ENCODE measurements at regions of chr14 and their contacts with region 1.

Region 1: GRCh38 chr14:59507063-59507780 is 22.9 kb downstream of the JKAMP start:
- DNase-seq: peak in 1 of 2 donors; percentile 32
- ATAC-seq: peak in 6 of 8 donors; percentile 47 to 75 (median 58)
- H3K4me3 ChIP-seq: no peak overlapping the region
- H3K27ac ChIP-seq: no peak overlapping the region
- H3K4me1 ChIP-seq: no peaks in the 10 kb centered on the region
- H3K27me3 ChIP-seq: peaks cover 0 to 8% (median 0%) of the 10 kb centered on the region in 7 donors
- CTCF ChIP-seq: peak in 8 of 9 donors; percentile 55 to 81 (median 70)

Region 2: DNA sequence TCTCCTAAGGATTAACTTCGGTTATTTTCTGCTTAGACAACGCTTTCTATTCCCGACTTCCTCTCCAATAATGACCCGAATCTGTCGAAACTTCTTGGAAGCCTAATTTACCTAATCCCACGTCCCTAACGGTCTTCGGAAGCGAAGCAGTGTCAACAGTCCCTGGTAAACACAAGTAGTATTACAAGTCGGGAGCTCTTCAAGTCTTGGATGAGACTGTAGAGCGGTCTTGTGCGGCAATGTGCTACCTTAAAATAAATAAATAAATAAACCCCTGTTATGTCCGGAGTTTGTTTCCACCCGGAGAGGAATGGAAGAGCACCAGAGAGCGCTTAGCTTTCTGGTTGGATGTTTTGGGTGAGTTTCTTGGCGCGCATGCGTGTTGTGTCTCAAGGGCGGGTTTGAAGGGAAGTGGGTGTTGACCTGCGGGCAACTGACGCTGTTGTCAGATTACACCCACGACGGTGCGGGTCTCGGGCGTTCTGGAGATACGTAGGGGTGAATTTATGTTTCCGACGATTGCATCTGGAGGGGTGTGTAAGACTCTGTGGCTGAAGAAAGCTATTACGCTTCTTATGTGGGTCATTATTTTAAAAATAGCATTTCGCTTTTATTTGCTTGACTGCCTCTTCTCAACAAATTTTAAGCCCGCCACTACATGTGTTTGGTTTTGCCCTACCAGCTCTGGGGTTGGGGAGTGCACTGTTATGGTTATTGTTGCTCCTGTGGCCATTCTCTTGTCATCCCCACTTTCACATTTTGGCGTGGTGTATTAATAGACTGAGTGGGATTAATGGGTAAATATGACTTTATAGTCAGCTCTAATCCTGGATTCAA is 1079.7 kb before region 1 on chr14 and contains the starts of genes KIAA0586 and TIMM9:
- intact Hi-C with region 1: no loop called
- DNase-seq: peak; percentile 94 to 97
- ATAC-seq: peak; percentile 97 to 99 (median 98)
- H3K4me3 ChIP-seq: peak within 1 kb of the TSS; percentile 75 to 96 (median 81)
- H3K27ac ChIP-seq: peak within 1 kb of the TSS; percentile 69 to 99 (median 91)
- H3K4me1 ChIP-seq: peaks cover 0 to 41% (median 23%) of the 10 kb centered on the region in 9 donors
- H3K27me3 ChIP-seq: no peaks in the 10 kb centered on the region
- CTCF ChIP-seq: peak in 1 of 9 donors; percentile 3
- total RNA-seq, gene KIAA0586: 8.0 to 15.9 (median 12.4) TPM
- total RNA-seq, gene TIMM9: 24.6 to 39.3 (median 26.3) TPM

Region 3: GRCh38 chr14:59576332-59577294 is 69.4 kb after region 1 on chr14 and contains the start of gene CCDC175:
- intact Hi-C with region 1: loop called in 1 of 10 experiments (anchors 10 kb)
- DNase-seq: peak; percentile 61 to 81
- ATAC-seq: peak; percentile 69 to 92 (median 80)
- H3K4me3 ChIP-seq: peak within 1 kb of the TSS in 9 of 10 donors; percentile 16 to 54 (median 43)
- H3K27ac ChIP-seq: no peak within 1 kb of the TSS
- H3K4me1 ChIP-seq: peaks cover 0 to 12% (median 5%) of the 10 kb centered on the region in 9 donors
- H3K27me3 ChIP-seq: peaks cover 0 to 45% (median 19%) of the 10 kb centered on the region in 7 donors
- CTCF ChIP-seq: peak; percentile 31 to 71 (median 63)
- total RNA-seq, gene CCDC175: not detected

Region 4: GRCh38 chr14:60184146-60184904 is 677.1 kb after region 1 on chr14:
- intact Hi-C with region 1: loop called in 1 of 10 experiments (anchors 5 kb)
- DNase-seq: peak in 1 of 2 donors; percentile 32
- ATAC-seq: peak in 4 of 8 donors; percentile 34 to 63 (median 58)
- H3K4me3 ChIP-seq: peak overlapping the region in 9 of 10 donors; percentile 30 to 62 (median 50)
- H3K27ac ChIP-seq: peak overlapping the region in 6 of 10 donors; percentile 18 to 74 (median 42)
- H3K4me1 ChIP-seq: peaks cover 0 to 9% (median 0%) of the 10 kb centered on the region in 9 donors
- H3K27me3 ChIP-seq: no peaks in the 10 kb centered on the region
- CTCF ChIP-seq: peak; percentile 61 to 93 (median 80)